ENCODE measurements at regions of chr1 and their contacts with region 1.

Region 1: GRCh38 chr1:223811634-223812415 is 33.9 kb downstream of the TP53BP2 start:
- DNase-seq: peak; percentile 45 to 74 (median 73)
- H3K4me3 ChIP-seq: no peak overlapping the region
- H3K27ac ChIP-seq: no peak overlapping the region
- H3K4me1 ChIP-seq: no peaks in the 10 kb centered on the region
- H3K27me3 ChIP-seq: no peaks in the 10 kb centered on the region

Region 2: DNA sequence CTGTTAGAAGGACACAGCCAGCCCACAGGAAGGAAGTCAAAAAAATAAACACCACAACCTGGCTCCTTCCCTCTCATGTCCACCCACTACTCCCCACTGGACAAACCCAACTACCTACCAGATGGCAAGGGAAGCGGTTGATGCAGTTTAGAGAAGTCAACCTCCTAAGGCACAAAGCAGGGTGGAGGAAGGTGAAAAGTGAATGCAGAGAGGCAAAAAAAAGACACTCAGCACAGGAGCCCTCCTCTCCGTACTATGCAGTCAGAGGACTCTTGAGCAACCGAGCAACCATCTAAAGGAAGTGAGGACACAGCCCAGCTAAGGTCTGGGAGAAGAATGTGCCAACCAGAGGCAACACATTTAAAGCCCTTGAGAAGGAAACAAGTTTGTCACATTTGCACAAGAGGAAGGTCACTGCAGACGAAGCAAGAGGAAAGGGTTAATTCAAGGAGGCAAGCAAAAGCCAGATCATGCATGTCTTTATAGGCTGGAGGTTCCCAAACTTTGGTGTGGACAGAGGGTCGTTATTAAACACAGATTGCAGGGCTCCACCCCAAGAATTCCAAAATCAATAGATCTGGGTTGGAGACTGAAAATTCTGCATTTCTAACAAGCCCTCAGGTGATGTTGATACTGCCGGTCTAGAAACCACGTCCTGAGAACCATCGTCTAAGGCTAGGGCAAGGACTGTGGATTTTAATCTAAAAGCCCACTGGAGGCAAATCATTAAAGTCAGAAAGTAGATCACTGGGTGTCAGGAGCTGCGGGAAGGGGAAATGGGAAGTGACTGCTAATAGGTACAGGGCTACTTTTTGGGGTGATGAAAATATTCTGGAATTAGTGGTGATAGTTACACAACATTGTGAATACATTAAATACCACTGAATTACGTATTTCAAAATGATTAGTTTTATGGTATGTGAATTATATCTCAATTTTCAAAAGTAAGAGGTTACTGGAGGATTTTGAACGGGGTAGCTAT is 14.2 kb after region 1 on chr1:
- CTCF ChIA-PET with region 1: interaction called, 15 read pairs
- POLR2A ChIA-PET with region 1: no interaction called
- DNase-seq: peak in 2 of 3 donors; percentile 62 to 68
- H3K4me3 ChIP-seq: peak overlapping the region in 2 of 7 experiments; percentile 8 to 25
- H3K27ac ChIP-seq: no peak overlapping the region
- H3K4me1 ChIP-seq: peaks cover 9 to 39% (median 15%) of the 10 kb centered on the region in 4 experiments
- H3K27me3 ChIP-seq: no peaks in the 10 kb centered on the region

Region 3: GRCh38 chr1:223840254-223840653 is 28.4 kb after region 1 on chr1:
- CTCF ChIA-PET with region 1: interaction called, 16 read pairs
- POLR2A ChIA-PET with region 1: interaction called, 5 read pairs
- DNase-seq: no peak
- H3K4me3 ChIP-seq: no peak overlapping the region
- H3K27ac ChIP-seq: no peak overlapping the region
- H3K4me1 ChIP-seq: peaks cover 10 to 48% (median 27%) of the 10 kb centered on the region in 4 experiments
- H3K27me3 ChIP-seq: no peaks in the 10 kb centered on the region

Region 4: DNA sequence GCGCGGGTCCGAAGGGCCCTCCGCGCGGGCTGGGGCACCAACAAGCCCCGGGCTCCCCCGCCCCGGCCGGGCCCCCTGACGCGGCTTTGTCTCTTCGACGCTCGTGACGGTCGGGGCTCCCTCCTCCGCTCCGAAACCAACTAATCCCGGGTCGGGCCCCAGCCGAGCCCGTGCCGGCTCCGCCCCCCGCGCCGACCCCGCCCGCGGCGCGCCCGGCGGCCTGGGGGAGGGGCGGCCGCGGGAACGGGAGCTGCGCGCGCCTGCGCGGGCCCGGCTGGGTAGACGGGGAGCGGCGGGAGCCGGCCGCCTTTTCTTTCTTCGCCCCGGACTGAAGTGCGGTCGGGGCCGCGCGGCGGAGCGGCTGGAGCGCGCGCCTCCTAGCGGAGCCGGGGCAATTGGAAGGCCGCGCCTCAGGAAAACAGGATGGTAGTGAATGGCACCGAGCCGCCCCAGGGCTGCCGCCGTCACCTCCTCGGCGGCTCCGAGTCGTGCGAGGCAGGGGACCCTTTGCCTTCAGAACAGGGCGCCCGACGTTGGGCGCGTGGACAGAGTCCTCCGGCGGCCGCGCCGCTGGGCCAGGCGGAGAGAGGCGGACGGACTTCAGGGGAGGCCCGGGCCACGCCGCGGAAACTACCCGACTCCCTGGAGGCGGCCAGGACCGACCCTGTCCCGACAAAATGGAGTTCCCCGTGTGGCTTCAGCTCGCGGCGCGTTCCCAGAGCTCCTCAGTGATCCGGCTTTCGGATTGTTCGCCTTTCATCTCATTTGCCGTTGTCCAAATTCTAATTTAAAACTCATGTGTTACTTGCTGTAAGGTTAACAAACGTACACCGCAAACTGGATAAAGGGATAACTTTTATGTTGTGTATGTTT is 34.2 kb after region 1 on chr1 and contains the start of gene TP53BP2:
- CTCF ChIA-PET with region 1: interaction called, 16 read pairs
- POLR2A ChIA-PET with region 1: interaction called, 7 read pairs
- DNase-seq: peak; percentile 91 to 93 (median 92)
- H3K4me3 ChIP-seq: peak within 1 kb of the TSS; percentile 79 to 96 (median 81)
- H3K27ac ChIP-seq: peak within 1 kb of the TSS; percentile 94 to 98
- H3K4me1 ChIP-seq: peaks cover 10 to 25% (median 14%) of the 10 kb centered on the region in 4 experiments
- H3K27me3 ChIP-seq: no peaks in the 10 kb centered on the region

Measured in common myeloid progenitor, CD34-positive (primary cell).